Activated T-helper 2 cell treated with anti-CD3 and anti-CD28 coated beads, Interferon-gamma antibody, Interleukin-2, Interleukin-4, amounts not matched to agents 10 μg/mL and 5 μg/mL and 100 μg/mL, durations not matched to agents 14 hours and 24 hours and 36 hours (primary cell): ENCODE measurements at regions of chr7 and their contacts with region 1.

Region 1: DNA sequence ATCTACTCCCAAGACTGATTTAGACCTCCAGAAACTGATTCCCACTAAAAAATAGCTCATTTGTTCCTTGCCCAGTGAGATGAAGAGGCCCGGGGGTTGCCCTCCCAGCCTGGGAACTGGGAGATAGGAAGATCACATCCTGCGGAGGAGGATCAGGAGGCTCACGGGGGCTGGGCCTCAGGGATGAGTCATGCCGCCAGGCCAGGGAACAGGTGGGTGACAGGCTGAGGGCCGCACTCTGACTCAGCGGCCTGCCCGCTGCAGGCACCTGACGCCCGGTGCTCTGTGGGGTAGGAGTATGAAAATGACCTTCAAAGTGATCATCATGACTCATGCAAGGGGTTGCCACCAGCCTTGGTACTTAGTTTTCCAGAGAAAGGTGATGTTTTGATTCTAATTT is 104.5 kb upstream of the ZPBP start:
- DNase-seq: no peak
- H3K4me3 Mint-ChIP-seq: no peak overlapping the region
- H3K27ac Mint-ChIP-seq: peak overlapping the region; percentile 82
- H3K4me1 Mint-ChIP-seq: peaks cover 41% of the 10 kb centered on the region
- H3K27me3 Mint-ChIP-seq: peaks cover 4% of the 10 kb centered on the region

Region 2: GRCh38 chr7:50142425-50143017 is 55.0 kb before region 1 on chr7:
- intact Hi-C with region 1: loop called (anchors 2 kb)
- DNase-seq: no peak
- H3K4me3 Mint-ChIP-seq: peak overlapping the region; percentile 30
- H3K27ac Mint-ChIP-seq: peak overlapping the region; percentile 77
- H3K4me1 Mint-ChIP-seq: peaks cover 44% of the 10 kb centered on the region
- H3K27me3 Mint-ChIP-seq: peaks cover 2% of the 10 kb centered on the region

Region 3: GRCh38 chr7:50156706-50157105 is 40.8 kb before region 1 on chr7:
- intact Hi-C with region 1: loop called (anchors 2 kb)
- DNase-seq: no peak
- H3K4me3 Mint-ChIP-seq: peak overlapping the region; percentile 66
- H3K27ac Mint-ChIP-seq: peak overlapping the region; percentile 87
- H3K4me1 Mint-ChIP-seq: peaks cover 65% of the 10 kb centered on the region
- H3K27me3 Mint-ChIP-seq: no peaks in the 10 kb centered on the region

Region 4: GRCh38 chr7:50166997-50167965 is 30.3 kb before region 1 on chr7:
- intact Hi-C with region 1: loop called (anchors 1 kb)
- DNase-seq: no peak
- H3K4me3 Mint-ChIP-seq: no peak overlapping the region
- H3K27ac Mint-ChIP-seq: peak overlapping the region; percentile 86
- H3K4me1 Mint-ChIP-seq: peaks cover 55% of the 10 kb centered on the region
- H3K27me3 Mint-ChIP-seq: peaks cover 6% of the 10 kb centered on the region

Region 5: GRCh38 chr7:50449881-50450589 is 252.5 kb after region 1 on chr7 and contains the start of gene FIGNL1:
- intact Hi-C with region 1: loop called (anchors 5 kb)
- DNase-seq: peak; percentile 81
- H3K4me3 Mint-ChIP-seq: peak within 1 kb of the TSS; percentile 86
- H3K27ac Mint-ChIP-seq: peak within 1 kb of the TSS; percentile 71
- H3K4me1 Mint-ChIP-seq: peaks cover 41% of the 10 kb centered on the region
- H3K27me3 Mint-ChIP-seq: no peaks in the 10 kb centered on the region
- total RNA-seq, gene FIGNL1: 40.0 and 42.5 TPM in 2 replicates